K562 (cell line): ENCODE measurements at regions of chr7 and their contacts with region 1.

Region 1: GRCh38 chr7:99876491-99876890 is 342 bp downstream of the OR2AE1 start:
- DNase-seq: peak in 2 of 4 experiments; percentile 32 to 43
- ATAC-seq: peak; percentile 90
- H3K4me3 ChIP-seq: no peak overlapping the region
- H3K27ac ChIP-seq: no peak overlapping the region
- H3K4me1 ChIP-seq: no peaks in the 10 kb centered on the region; a peak in 1 of 5 replicates
- H3K27me3 ChIP-seq: peaks cover 10 to 23% of the 10 kb centered on the region in 2 experiments; a peak in 4 of 5 replicates
- CTCF ChIP-seq: peak; percentile 40 to 60 (median 48); a peak in 5 of 6 replicates
- EP300 ChIP-seq: no peak
- POLR2A ChIP-seq: no peak
- RAD21 ChIP-seq: peak; percentile 59 to 75

Region 2: GRCh38 chr7:99631295-99632109 is 245.0 kb before region 1 on chr7:
- CTCF ChIA-PET with region 1: no interaction called
- POLR2A ChIA-PET with region 1: no interaction called
- in situ Hi-C with region 1: no loop called
- intact Hi-C with region 1: loop called (anchors 5 kb)
- DNase-seq: peak; percentile 39 to 76 (median 58)
- ATAC-seq: peak; percentile 94
- H3K4me3 ChIP-seq: no peak overlapping the region
- H3K27ac ChIP-seq: no peak overlapping the region; the same call in 2 of the 3 replicates
- H3K4me1 ChIP-seq: peaks cover 0 to 4% of the 10 kb centered on the region in 2 experiments; a peak in 4 of 5 replicates
- H3K27me3 ChIP-seq: no peaks in the 10 kb centered on the region
- CTCF ChIP-seq: peak; percentile 70 to 90 (median 80)
- EP300 ChIP-seq: no peak
- POLR2A ChIP-seq: no peak
- RAD21 ChIP-seq: peak; percentile 84 to 88

Region 3: GRCh38 chr7:99975782-99976521 is 99.5 kb after region 1 on chr7 and contains the start of gene AZGP1:
- CTCF ChIA-PET with region 1: no interaction called
- POLR2A ChIA-PET with region 1: no interaction called
- in situ Hi-C with region 1: no loop called
- intact Hi-C with region 1: no loop called
- DNase-seq: no peak
- ATAC-seq: no peak
- H3K4me3 ChIP-seq: no peak within 1 kb of the TSS
- H3K27ac ChIP-seq: no peak within 1 kb of the TSS
- H3K4me1 ChIP-seq: peaks cover 4 to 7% of the 10 kb centered on the region in 2 experiments; a peak in 2 of 5 replicates
- H3K27me3 ChIP-seq: peaks cover 13 to 24% of the 10 kb centered on the region in 2 experiments; a peak in 3 of 5 replicates
- CTCF ChIP-seq: no peak
- EP300 ChIP-seq: no peak
- POLR2A ChIP-seq: no peak
- RAD21 ChIP-seq: no peak
- polyA plus RNA-seq, gene AZGP1: not detected